ENCODE measurements at regions of chr6 and their contacts with region 1.

Region 1: DNA sequence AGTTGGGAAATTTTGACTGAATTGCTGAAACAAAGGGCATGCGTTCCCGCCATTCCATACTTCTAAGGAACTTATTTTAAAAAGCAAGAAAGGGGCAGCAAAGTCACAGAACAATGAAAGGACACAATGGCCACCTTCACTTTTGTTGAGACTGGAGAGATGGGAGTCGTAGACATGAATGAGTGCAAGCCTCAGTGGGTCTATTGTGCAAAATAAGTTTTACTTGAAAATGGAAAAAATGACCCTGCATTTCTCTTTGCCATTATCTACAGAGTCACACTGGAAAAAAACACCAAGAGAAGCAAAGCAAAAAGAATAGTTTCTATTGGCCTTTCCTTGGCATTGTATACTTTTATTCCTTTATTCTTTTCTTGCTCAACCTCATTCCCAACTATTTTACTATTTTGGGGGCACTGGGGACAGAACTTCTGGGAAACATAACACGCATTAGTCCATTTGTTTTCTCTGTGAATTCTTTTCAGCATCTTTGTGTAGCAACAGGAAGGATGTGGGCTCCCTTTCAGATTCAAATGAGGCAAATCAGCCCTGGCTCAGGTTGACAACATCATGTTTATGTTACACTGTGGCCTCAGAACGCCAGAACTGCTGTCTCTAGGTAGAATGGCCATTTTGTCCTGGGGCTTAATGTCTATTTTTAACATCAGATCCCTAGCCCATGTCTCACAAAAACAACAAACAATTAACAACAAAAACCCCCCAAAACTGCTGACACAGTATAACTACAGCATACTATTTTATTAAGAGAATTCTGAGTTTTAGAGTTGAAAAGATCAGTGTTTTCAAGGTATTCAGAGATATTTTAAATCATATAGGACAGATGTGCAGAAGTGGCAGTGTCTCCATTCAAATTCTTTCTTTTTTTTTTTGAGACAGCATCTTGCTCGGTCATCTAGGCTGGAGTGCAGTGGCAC is 122.2 kb downstream of the FYN start:
- DNase-seq: peak; percentile 82 to 89 (median 85)
- H3K4me3 ChIP-seq: peak overlapping the region in 1 of 2 donors; percentile 10
- H3K4me3 Mint-ChIP-seq: peak overlapping the region; percentile 58 to 91 (median 79)
- H3K27ac ChIP-seq: peak overlapping the region; percentile 74
- H3K27ac Mint-ChIP-seq: peak overlapping the region; percentile 97 to 100 (median 99)
- H3K4me1 ChIP-seq: peaks cover 100% of the 10 kb centered on the region
- H3K4me1 Mint-ChIP-seq: peaks cover 81 to 98% (median 90%) of the 10 kb centered on the region in 4 donors
- H3K27me3 ChIP-seq: no peaks in the 10 kb centered on the region
- H3K27me3 Mint-ChIP-seq: no peaks in the 10 kb centered on the region

Region 2: DNA sequence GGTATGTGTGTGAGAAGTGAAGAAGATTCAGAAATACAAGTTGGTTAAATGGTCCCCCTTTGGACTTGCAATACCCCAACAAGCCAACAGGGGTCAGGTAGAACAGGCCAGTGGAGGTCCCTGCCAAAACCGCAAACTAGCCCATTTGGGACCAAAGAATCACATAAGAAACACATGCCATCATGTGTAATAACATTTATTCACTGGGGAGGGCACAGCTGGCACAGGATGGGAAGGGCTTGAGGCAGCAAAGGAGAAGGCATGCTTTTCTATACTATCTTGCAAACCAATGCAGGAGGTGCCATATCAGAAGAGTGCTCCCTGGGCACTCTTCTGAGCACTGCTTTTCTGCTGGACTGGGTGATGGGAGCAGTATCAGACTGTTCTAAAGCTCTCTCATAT is 29.3 kb before region 1 on chr6:
- CTCF ChIA-PET with region 1: interaction called, 16 read pairs
- POLR2A ChIA-PET with region 1: interaction called, 13 read pairs
- intact Hi-C with region 1: no loop called
- DNase-seq: peak; percentile 46 to 57 (median 50)
- H3K4me3 ChIP-seq: no peak overlapping the region
- H3K4me3 Mint-ChIP-seq: peak overlapping the region in 3 of 8 donors; percentile 17 to 81 (median 39)
- H3K27ac ChIP-seq: no peak overlapping the region
- H3K27ac Mint-ChIP-seq: peak overlapping the region; percentile 77 to 92 (median 88)
- H3K4me1 ChIP-seq: peaks cover 76% of the 10 kb centered on the region
- H3K4me1 Mint-ChIP-seq: peaks cover 61 to 84% (median 75%) of the 10 kb centered on the region in 4 donors
- H3K27me3 ChIP-seq: no peaks in the 10 kb centered on the region
- H3K27me3 Mint-ChIP-seq: no peaks in the 10 kb centered on the region

Region 3: DNA sequence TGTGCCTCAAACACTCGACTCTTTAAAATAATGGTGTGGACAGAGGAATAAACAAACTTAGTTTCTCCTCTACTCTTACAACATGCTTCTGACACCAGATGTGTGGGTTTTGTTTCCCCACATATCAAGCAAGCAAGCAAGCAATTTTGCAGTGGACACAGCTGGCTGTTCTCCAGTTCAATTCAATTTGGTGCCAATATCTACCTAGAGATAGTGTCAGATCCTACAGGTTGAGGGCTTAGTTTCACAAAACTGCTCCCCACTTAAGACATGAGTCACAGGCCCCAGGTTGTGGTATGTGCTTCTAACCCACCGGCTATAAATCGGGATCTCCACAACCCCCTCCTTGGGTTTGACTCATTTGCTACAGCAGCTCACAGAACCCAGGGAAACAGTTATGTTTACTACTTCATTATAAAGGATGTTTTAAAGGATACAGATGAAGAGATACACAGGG is 13.9 kb before region 1 on chr6:
- CTCF ChIA-PET with region 1: interaction called, 4 read pairs
- POLR2A ChIA-PET with region 1: interaction called, 201 read pairs
- intact Hi-C with region 1: loop called (anchors 1 kb)
- DNase-seq: peak in 1 of 5 donors; percentile 78
- H3K4me3 ChIP-seq: no peak overlapping the region
- H3K4me3 Mint-ChIP-seq: peak overlapping the region in 7 of 8 donors; percentile 32 to 81 (median 69)
- H3K27ac ChIP-seq: peak overlapping the region; percentile 32
- H3K27ac Mint-ChIP-seq: peak overlapping the region; percentile 87 to 97 (median 93)
- H3K4me1 ChIP-seq: peaks cover 100% of the 10 kb centered on the region
- H3K4me1 Mint-ChIP-seq: peaks cover 74 to 100% (median 86%) of the 10 kb centered on the region in 4 donors
- H3K27me3 ChIP-seq: no peaks in the 10 kb centered on the region
- H3K27me3 Mint-ChIP-seq: no peaks in the 10 kb centered on the region

Region 4: DNA sequence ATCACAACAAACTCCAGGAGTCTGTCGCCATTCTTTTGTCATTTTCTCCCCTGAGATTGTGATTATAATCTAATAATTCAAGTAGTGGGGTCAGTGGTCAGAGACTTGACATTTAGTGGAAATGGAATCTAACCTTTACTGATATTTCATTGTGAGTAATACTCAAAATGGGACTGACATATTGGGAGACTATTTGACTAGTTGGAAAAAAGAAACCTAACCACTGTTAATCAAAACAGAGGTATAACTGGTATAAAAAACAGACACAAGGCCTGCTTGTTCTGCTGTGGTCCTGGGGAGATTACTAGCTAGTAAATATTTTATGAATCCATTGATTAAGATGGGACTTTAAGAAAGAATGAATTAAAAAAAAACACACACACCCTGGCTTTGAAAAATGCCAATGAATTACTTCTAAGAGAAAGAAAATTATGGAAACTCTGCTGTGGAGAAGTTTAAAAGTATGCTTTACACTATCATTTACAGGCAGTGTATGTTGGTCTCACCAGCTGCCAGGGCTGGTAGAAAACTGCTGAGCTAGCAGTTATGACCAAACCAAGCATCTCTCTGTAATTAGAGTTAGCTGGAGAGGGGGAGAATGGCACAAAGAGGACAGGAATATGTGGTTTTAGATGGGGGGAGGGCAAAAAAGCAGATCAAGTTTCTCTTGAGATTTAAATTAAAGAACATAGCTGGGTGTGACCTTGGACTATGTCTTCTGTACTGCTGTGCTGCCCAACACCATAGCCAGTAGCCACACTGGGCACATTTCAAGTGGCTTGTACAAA is 18.5 kb after region 1 on chr6:
- CTCF ChIA-PET with region 1: interaction called, 28 read pairs
- POLR2A ChIA-PET with region 1: interaction called, 201 read pairs
- intact Hi-C with region 1: loop called (anchors 2 kb)
- DNase-seq: no peak
- H3K4me3 ChIP-seq: no peak overlapping the region
- H3K4me3 Mint-ChIP-seq: peak overlapping the region in 5 of 8 donors; percentile 19 to 89 (median 60)
- H3K27ac ChIP-seq: peak overlapping the region; percentile 18
- H3K27ac Mint-ChIP-seq: peak overlapping the region; percentile 81 to 100 (median 99)
- H3K4me1 ChIP-seq: peaks cover 91% of the 10 kb centered on the region
- H3K4me1 Mint-ChIP-seq: peaks cover 79 to 93% (median 85%) of the 10 kb centered on the region in 4 donors
- H3K27me3 ChIP-seq: no peaks in the 10 kb centered on the region
- H3K27me3 Mint-ChIP-seq: no peaks in the 10 kb centered on the region

Region 5: DNA sequence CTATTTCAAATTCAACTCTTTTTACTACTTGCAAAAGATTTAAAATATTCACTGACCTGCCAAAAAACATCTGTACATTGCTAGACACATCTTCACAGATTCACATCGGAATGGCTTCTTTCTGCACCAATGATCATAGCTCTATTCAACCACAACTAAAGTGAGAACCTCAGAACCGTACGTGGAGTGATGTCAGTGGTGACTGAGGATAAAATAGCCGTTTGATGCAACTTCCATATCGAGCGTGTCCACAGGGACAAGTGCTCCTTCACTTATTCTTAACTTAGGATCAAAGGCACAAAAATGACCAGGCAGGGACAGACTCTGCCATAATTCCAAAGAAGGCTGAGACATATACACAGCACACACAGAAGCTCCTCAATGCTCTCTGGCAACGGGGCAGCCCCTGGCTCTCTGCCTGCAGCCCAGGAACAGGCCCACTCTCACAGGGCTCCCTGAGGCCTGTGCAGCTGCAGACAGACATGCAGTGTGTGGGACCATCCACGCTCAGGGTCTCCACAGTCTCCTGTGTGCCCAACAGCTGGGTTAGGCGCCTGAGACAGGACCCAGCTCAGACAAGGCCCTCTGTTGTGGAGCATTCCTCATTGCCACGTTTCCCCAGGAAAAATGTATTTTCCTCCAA is 99.4 kb after region 1 on chr6:
- CTCF ChIA-PET with region 1: interaction called, 3 read pairs
- POLR2A ChIA-PET with region 1: interaction called, 3 read pairs
- intact Hi-C with region 1: loop called (anchors 1 kb)
- DNase-seq: peak in 3 of 5 donors; percentile 36 to 55 (median 54)
- H3K4me3 ChIP-seq: no peak overlapping the region
- H3K4me3 Mint-ChIP-seq: peak overlapping the region in 7 of 8 donors; percentile 59 to 90 (median 73)
- H3K27ac ChIP-seq: peak overlapping the region; percentile 33
- H3K27ac Mint-ChIP-seq: peak overlapping the region; percentile 76 to 95 (median 87)
- H3K4me1 ChIP-seq: peaks cover 99% of the 10 kb centered on the region
- H3K4me1 Mint-ChIP-seq: peaks cover 66 to 82% (median 73%) of the 10 kb centered on the region in 4 donors
- H3K27me3 ChIP-seq: no peaks in the 10 kb centered on the region
- H3K27me3 Mint-ChIP-seq: no peaks in the 10 kb centered on the region